IMR-90 (cell line): ENCODE measurements at regions of chr2 and their contacts with region 1.

Region 1: DNA sequence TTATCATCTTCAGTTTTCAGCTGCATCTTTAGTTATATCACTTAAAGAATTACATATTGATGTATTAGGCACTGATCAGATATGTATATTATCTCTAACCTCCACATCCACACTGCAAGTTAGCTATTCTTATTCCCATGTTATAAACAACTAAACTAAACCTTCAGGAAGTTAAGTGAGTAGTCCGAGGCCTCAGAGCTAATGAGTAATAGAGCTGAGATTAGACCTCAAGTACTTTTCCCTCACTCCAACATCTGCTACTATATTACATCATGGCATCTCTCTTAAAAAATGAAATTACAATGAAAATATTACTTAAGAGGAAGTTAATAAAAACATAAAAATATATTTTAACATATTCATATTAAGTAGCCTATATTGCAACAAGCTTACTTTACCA is 183.6 kb upstream of the MAP2 start:
- DNase-seq: no peak
- ATAC-seq: no peak
- H3K4me3 ChIP-seq: no peak overlapping the region
- H3K27ac ChIP-seq: no peak overlapping the region
- H3K4me1 ChIP-seq: no peaks in the 10 kb centered on the region
- H3K27me3 ChIP-seq: no peaks in the 10 kb centered on the region
- CTCF ChIP-seq: no peak
- POLR2A ChIP-seq: no peak
- RAD21 ChIP-seq: no peak

Region 2: GRCh38 chr2:208757364-208757763 is 482.8 kb before region 1 on chr2:
- CTCF ChIA-PET with region 1: no interaction called
- POLR2A ChIA-PET with region 1: no interaction called
- dilution Hi-C with region 1: no loop called
- in situ Hi-C with region 1: no loop called
- intact Hi-C with region 1: no loop called
- DNase-seq: no peak
- ATAC-seq: no peak
- H3K4me3 ChIP-seq: no peak overlapping the region
- H3K27ac ChIP-seq: no peak overlapping the region
- H3K4me1 ChIP-seq: no peaks in the 10 kb centered on the region
- H3K27me3 ChIP-seq: no peaks in the 10 kb centered on the region
- CTCF ChIP-seq: no peak
- POLR2A ChIP-seq: no peak
- RAD21 ChIP-seq: no peak

Region 3: DNA sequence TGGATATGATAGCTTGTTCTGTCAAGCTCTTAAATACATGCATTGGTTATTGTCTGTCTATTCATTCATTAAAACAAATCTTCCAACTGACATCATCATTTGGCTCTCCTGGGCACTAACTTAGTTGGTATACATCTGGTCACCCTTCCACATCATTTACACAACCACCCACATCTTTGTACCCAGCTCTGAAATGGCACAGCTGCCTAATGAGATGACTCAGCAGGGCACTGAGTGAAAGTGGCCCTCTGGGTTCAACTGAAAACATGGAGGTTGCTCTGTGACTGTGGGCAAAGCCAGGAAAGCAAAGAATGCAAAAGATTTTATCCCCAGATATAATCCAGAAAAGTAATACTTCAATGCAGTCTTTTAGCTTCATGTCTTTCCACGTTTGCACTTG is 50.3 kb before region 1 on chr2:
- CTCF ChIA-PET with region 1: no interaction called
- POLR2A ChIA-PET with region 1: interaction called, 16 read pairs
- dilution Hi-C with region 1: no loop called
- in situ Hi-C with region 1: no loop called
- intact Hi-C with region 1: no loop called
- DNase-seq: no peak
- ATAC-seq: no peak
- H3K4me3 ChIP-seq: no peak overlapping the region
- H3K27ac ChIP-seq: no peak overlapping the region
- H3K4me1 ChIP-seq: no peaks in the 10 kb centered on the region
- H3K27me3 ChIP-seq: no peaks in the 10 kb centered on the region
- CTCF ChIP-seq: no peak
- POLR2A ChIP-seq: no peak
- RAD21 ChIP-seq: no peak

Region 4: GRCh38 chr2:209523867-209524266 is 283.7 kb after region 1 on chr2:
- CTCF ChIA-PET with region 1: no interaction called
- POLR2A ChIA-PET with region 1: no interaction called
- dilution Hi-C with region 1: no loop called
- in situ Hi-C with region 1: no loop called
- intact Hi-C with region 1: no loop called
- DNase-seq: peak; percentile 2
- ATAC-seq: no peak
- H3K4me3 ChIP-seq: no peak overlapping the region
- H3K27ac ChIP-seq: no peak overlapping the region
- H3K4me1 ChIP-seq: 0 out of 2 replicates have a peak, but pooled peaks cover 1% of the 10 kb centered on the region
- H3K27me3 ChIP-seq: no peaks in the 10 kb centered on the region
- CTCF ChIP-seq: no peak
- POLR2A ChIP-seq: no peak
- RAD21 ChIP-seq: no peak